ENCODE measurements at regions of chr5 and their contacts with region 1.

Region 1: DNA sequence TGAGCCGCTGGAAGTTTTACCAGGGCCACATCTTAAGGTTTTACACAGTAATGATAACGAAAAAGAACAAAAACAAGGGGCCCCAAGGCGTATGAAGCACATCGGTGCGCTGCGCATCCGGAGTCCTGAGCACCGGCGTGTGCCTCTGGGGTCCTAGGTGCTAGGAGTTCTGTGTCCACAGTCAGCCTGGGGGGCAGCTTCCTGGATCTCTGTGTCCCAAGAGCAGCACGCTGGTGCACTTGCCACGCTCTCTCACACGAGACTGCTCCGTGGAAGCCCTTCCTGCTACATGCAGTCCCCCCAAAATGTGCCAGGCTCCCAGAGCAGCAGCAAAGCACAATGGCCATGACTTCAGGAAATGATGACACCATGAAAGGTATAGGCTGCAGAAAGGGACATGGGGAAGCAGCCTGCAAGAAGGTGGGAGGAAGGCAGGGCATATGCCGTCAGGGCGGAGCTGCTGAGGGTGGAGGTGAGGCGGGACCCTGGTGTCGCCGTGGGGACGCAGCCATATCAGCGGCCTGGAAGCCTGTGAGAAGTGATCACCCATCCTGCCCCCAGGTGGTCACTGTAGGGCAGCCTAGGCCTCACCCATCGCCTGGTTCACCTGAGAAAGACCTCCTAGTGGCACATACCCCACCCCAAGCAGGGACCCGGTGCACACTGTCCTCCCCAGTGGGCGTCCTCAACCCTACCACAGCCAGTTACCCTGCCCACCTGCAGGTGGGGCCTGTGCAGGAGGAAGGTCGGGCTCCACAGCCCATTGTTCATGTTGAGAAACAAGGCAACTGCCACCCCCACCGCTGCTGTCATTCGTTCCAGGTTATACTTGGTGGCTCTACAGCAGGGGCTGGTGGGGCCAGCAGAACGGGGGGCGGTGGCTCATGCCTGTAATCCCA is 23.6 kb upstream of the SLC6A3 start:
- DNase-seq: no peak
- CTCF ChIP-seq: no peak

Region 2: GRCh38 chr5:1445313-1445894 is 23.5 kb before region 1 on chr5 and contains the start of gene SLC6A3:
- CTCF ChIA-PET with region 1: no interaction called
- POLR2A ChIA-PET with region 1: no interaction called
- DNase-seq: no peak
- CTCF ChIP-seq: no peak

Region 3: GRCh38 chr5:1488943-1489680 is 20.2 kb after region 1 on chr5:
- CTCF ChIA-PET with region 1: interaction called, 12 read pairs
- POLR2A ChIA-PET with region 1: interaction called, 4 read pairs
- DNase-seq: peak; percentile 79
- CTCF ChIP-seq: no peak

Region 4: GRCh38 chr5:1526681-1527131 is 57.8 kb after region 1 on chr5:
- CTCF ChIA-PET with region 1: no interaction called
- POLR2A ChIA-PET with region 1: no interaction called
- DNase-seq: no peak
- CTCF ChIP-seq: no peak